T-cell (primary cell): ENCODE measurements at regions of chr2 and their contacts with region 1.

Region 1: DNA sequence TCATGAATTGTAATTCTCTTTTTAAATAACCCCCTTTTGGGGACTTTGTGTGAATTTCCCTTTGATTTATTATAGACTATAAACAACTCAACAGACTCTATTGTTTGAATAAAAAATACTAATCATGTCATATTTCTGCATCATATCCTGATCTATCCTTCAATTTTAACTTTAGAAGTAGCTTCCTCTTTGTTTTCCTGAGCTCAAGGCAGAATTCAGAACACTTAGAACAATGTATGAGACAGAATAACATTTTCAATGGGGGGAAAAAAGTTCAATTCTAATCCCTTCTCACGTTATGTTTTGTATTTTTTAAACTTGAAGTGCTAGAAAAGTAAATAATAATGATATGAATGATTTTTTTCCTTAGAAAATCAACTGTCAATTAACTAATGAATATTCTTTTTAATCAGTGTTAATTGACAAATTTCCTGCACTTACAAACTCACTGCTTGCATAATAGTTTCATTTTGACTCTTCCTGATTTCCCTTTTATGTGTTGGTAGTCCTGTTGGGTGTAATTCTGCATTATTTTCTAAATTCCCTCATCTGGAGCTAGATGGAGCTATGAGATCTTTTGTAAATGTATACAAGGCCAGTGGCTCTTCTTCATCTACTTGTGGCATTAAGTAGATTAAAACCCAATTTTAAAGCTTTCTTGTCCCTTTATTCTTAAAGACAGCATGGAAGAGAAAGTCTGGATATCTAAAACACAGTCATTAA is 326.1 kb downstream of the PARD3B start:
- DNase-seq: peak in 1 of 35 experiments; percentile 58
- ATAC-seq: peak; percentile 50 to 77 (median 74)
- H3K4me3 ChIP-seq: no peak overlapping the region
- H3K4me3 Mint-ChIP-seq: no peak overlapping the region
- H3K27ac ChIP-seq: no peak overlapping the region
- H3K27ac Mint-ChIP-seq: peak overlapping the region in 1 of 2 donors; percentile 6
- H3K4me1 ChIP-seq: peaks cover 4 to 30% of the 10 kb centered on the region in 2 experiments
- H3K4me1 Mint-ChIP-seq: peaks cover 29 to 43% (median 33%) of the 10 kb centered on the region in 3 donors
- H3K27me3 ChIP-seq: no peaks in the 10 kb centered on the region
- H3K27me3 Mint-ChIP-seq: no peaks in the 10 kb centered on the region

Region 2: DNA sequence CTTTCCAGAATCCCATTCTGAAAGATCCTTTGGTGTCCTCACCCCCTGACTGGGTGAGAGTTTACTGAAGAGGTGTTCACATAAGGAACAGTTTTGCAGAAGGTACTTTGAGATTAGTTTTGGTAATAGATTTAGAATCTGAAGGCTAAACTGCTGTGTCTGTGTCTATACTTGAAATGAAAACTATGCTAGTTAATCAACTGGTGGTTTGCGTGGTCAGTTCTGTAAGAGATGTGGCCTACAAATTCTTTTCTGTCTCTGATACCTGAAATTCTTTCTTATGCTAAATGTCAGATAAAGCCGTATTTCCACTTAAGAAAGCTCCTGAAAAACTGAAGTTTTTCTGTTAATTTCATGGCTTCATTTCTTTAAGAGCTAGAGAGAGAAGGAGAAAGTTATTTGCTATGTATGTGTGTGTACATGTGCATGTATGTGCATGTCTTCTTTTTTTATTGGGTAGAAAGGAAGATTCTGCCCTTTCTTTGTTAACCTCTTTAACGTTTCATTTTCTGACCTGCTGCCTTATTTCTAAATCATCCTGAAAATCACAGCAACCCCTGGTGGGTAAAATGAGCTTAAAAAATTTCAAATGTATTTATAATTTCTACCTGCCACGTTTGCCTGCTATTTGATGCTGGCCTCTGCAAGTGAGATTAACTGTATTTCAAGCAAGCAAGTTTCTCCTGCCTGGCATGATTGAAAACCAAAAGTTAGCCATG is 258.9 kb after region 1 on chr2:
- CTCF ChIA-PET with region 1: interaction called, 3 to 26 read pairs
- POLR2A ChIA-PET with region 1: interaction called in 1 of 2 experiments, 3 read pairs
- DNase-seq: peak in 1 of 35 experiments; percentile 39
- ATAC-seq: peak in 3 of 4 experiments; percentile 19 to 41 (median 32)
- H3K4me3 ChIP-seq: no peak overlapping the region
- H3K4me3 Mint-ChIP-seq: peak overlapping the region in 1 of 3 donors; percentile 33
- H3K27ac ChIP-seq: peak overlapping the region; percentile 3
- H3K27ac Mint-ChIP-seq: peak overlapping the region; percentile 66 to 86
- H3K4me1 ChIP-seq: peaks cover 3 to 21% of the 10 kb centered on the region in 2 experiments
- H3K4me1 Mint-ChIP-seq: peaks cover 21 to 25% (median 25%) of the 10 kb centered on the region in 3 donors
- H3K27me3 ChIP-seq: no peaks in the 10 kb centered on the region
- H3K27me3 Mint-ChIP-seq: no peaks in the 10 kb centered on the region

Region 3: GRCh38 chr2:205675861-205676516 is 804.6 kb after region 1 on chr2:
- CTCF ChIA-PET with region 1: interaction called in 1 of 2 experiments, 17 read pairs
- POLR2A ChIA-PET with region 1: interaction called in 1 of 2 experiments, 3 read pairs
- DNase-seq: peak in 1 of 35 experiments; percentile 42
- ATAC-seq: no peak
- H3K4me3 ChIP-seq: no peak overlapping the region
- H3K4me3 Mint-ChIP-seq: no peak overlapping the region
- H3K27ac ChIP-seq: no peak overlapping the region
- H3K27ac Mint-ChIP-seq: no peak overlapping the region
- H3K4me1 ChIP-seq: no peaks in the 10 kb centered on the region
- H3K4me1 Mint-ChIP-seq: peaks cover 0 to 2% (median 0%) of the 10 kb centered on the region in 3 donors
- H3K27me3 ChIP-seq: peaks cover 0 to 12% of the 10 kb centered on the region in 2 experiments
- H3K27me3 Mint-ChIP-seq: peaks cover 11 to 13% of the 10 kb centered on the region in 2 donors